ENCODE measurements at regions of chr4 and their contacts with region 1.

Region 1: DNA sequence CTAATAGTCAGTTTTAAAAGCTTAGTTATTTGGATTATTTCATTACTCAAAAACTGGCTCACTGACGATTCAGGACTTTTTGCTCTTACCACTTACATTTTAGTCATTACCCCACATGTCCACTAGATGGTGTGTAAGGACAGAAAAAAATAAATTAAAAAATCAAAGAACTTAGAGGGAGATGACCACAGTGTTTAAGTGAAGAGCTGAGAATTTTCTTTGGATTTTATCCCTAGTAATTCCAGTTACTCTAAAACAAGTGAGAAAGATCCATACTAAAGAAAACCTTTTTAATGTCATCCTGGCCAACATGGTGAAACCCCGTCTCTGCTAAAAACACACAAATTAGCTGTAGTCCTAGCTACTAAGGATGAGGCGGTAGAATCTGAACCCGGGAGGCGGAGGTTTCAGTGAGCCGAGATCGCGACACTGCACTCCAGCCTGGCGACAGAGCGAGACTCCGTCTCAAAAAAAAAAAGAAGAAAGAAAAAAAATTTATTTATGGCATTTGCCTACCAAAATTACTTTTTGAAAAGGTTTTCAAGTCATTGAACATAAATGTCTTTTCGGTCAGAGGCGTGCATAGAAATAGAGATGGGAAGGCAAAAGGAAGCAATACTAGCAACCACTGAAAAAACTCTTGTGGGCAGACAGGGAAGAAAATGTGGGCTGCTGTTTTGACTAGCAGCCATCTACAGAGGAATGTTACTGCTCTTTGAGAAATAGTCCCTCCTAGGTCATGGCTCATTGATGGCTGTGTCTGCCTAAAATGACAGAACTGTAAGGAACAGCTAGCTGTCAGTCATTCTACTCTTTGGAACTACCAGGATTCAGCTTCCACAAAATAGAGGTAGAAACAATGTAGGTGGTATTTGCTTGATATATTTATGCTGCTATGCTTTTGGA is 26.6 kb upstream of the TMPRSS11B start:
- DNase-seq: peak; percentile 51
- H3K4me3 ChIP-seq: peak overlapping the region; percentile 32 to 40 (median 33)
- H3K27ac ChIP-seq: no peak overlapping the region
- H3K4me1 ChIP-seq: peaks cover 18% of the 10 kb centered on the region
- H3K27me3 ChIP-seq: no peaks in the 10 kb centered on the region
- CTCF ChIP-seq: peak; percentile 59 to 61

Region 2: GRCh38 chr4:68319040-68319439 is 46.9 kb after region 1 on chr4:
- CTCF ChIA-PET with region 1: no interaction called
- dilution Hi-C with region 1: no loop called
- in situ Hi-C with region 1: no loop called
- intact Hi-C with region 1: no loop called
- DNase-seq: no peak
- H3K4me3 ChIP-seq: no peak overlapping the region
- H3K27ac ChIP-seq: no peak overlapping the region
- H3K4me1 ChIP-seq: no peaks in the 10 kb centered on the region
- H3K27me3 ChIP-seq: no peaks in the 10 kb centered on the region
- CTCF ChIP-seq: no peak

Region 3: DNA sequence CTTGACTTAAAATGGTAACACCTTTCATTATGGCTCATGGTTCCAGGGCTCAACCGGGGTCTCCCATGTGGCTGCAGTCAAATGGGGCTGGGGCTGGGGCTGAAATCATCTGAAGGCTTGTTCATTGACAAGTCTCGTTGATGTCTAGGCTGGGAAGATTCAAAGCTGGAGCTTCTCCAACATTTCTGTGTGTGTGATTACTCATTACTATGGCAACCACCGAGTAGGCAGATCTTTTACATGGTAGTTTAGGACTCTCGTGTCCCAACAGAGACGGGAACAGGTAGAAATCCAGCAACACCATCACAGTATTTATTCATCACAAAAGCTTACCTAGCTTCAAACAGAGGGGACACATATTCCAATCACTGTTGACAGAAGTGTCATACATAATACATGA is 70.0 kb after region 1 on chr4:
- CTCF ChIA-PET with region 1: interaction called, 4 read pairs
- dilution Hi-C with region 1: no loop called
- in situ Hi-C with region 1: no loop called
- intact Hi-C with region 1: loop called (anchors 2 kb)
- DNase-seq: peak; percentile 76
- H3K4me3 ChIP-seq: no peak overlapping the region
- H3K27ac ChIP-seq: peak overlapping the region; percentile 75
- H3K4me1 ChIP-seq: peaks cover 38% of the 10 kb centered on the region
- H3K27me3 ChIP-seq: no peaks in the 10 kb centered on the region
- CTCF ChIP-seq: no peak

Region 4: GRCh38 chr4:68375667-68376559 is 103.8 kb after region 1 on chr4:
- CTCF ChIA-PET with region 1: interaction called, 33 read pairs
- dilution Hi-C with region 1: no loop called
- in situ Hi-C with region 1: no loop called
- intact Hi-C with region 1: loop called (anchors 1 kb)
- DNase-seq: peak; percentile 77
- H3K4me3 ChIP-seq: peak overlapping the region; percentile 45 to 49 (median 46)
- H3K27ac ChIP-seq: no peak overlapping the region
- H3K4me1 ChIP-seq: peaks cover 19% of the 10 kb centered on the region
- H3K27me3 ChIP-seq: no peaks in the 10 kb centered on the region
- CTCF ChIP-seq: peak; percentile 95 to 99

Region 5: GRCh38 chr4:68673143-68673542 is 401.0 kb after region 1 on chr4:
- CTCF ChIA-PET with region 1: no interaction called
- dilution Hi-C with region 1: no loop called
- in situ Hi-C with region 1: no loop called
- intact Hi-C with region 1: loop called (anchors 5 kb)
- DNase-seq: no peak
- H3K4me3 ChIP-seq: no peak overlapping the region
- H3K27ac ChIP-seq: no peak overlapping the region
- H3K4me1 ChIP-seq: no peaks in the 10 kb centered on the region
- H3K27me3 ChIP-seq: no peaks in the 10 kb centered on the region
- CTCF ChIP-seq: no peak

Region 6: GRCh38 chr4:69167300-69167699 is 895.2 kb after region 1 on chr4:
- CTCF ChIA-PET with region 1: no interaction called
- dilution Hi-C with region 1: no loop called
- in situ Hi-C with region 1: no loop called
- intact Hi-C with region 1: loop called (anchors 5 kb)
- DNase-seq: peak; percentile 2
- H3K4me3 ChIP-seq: no peak overlapping the region
- H3K27ac ChIP-seq: no peak overlapping the region
- H3K4me1 ChIP-seq: no peaks in the 10 kb centered on the region
- H3K27me3 ChIP-seq: peaks cover 2% of the 10 kb centered on the region
- CTCF ChIP-seq: no peak

Region 7: DNA sequence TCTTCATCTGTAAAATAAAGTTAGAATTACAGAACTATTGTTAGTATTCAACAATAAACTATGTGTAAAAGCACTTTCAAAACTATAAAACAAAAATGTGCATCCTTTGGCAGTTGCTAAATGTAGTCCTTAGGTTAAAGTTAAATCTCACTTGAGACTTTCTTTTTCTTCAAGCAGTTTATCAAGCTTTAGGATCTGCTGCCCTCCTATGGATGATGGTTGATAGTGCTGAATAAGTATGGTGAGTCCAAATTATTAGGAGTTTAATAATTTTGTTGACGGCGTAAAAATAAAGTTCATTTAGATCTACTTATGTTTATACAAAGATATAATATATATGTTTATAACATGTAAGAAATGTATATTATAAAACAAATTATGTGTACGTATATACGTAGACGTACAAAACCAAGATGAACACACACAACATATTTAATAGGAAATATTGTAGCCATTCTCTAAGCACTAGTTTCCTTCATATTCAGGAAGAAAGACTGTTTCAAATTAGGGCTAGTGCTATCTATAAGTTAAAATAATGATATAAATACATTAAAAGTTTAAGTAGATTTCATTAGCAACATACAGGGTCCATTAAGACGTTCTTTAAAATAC is 1345.1 kb after region 1 on chr4:
- CTCF ChIA-PET with region 1: no interaction called
- dilution Hi-C with region 1: no loop called
- in situ Hi-C with region 1: no loop called
- intact Hi-C with region 1: loop called (anchors 5 kb)
- DNase-seq: peak; percentile 27
- H3K4me3 ChIP-seq: no peak overlapping the region
- H3K27ac ChIP-seq: no peak overlapping the region
- H3K4me1 ChIP-seq: no peaks in the 10 kb centered on the region
- H3K27me3 ChIP-seq: no peaks in the 10 kb centered on the region
- CTCF ChIP-seq: peak; percentile 53 to 73

Measured in mammary epithelial cell (primary cell).